ENCODE measurements at regions of chr14 and their contacts with region 1.

Region 1: DNA sequence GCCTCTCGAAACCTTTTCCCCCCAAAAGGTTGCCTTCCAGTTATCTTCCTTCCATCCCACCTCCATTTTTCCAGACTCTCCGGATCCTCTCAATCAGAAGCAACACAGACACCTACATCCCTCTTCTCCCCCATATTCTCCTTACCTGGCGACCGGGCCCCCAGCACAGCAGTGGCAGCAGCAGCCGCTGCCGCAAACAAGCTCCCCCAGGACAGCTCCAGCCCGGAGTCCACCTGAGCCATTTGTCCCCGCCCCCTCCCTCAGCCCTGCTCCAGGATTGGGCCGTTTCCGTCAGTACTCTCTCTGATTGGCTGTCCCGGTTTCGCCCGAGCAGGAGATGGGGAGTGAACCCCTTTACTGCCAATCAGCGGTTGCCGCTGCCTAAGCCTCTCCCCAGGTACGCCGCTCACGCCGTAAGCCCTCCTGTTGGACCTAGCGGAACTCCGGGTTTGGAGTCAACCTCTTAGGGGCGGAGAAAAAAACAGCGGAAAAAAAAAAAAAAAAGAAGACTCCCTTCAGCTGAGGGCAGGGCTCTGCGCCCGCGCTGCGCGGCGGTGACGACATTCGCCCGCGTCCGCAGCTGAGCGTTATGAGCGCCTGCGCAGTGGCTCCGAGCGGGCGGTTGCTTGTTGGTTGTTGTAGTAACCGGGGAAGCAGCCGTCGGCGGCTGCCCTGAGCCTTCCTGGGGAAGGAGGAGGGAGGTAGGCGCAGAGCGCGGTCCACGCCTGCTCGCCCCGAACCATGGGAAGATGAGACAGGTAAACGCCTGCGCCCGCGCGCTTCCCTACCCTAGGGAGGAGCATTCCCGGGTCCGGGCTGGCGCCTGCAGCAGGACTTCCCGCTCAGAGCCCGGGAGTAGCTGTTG is at the starts of genes ERG28 and TTLL5:
- DNase-seq: peak; percentile 94 to 98 (median 97)
- ATAC-seq: peak; percentile 95
- H3K4me3 ChIP-seq: peak within 1 kb of the TSS; percentile 86
- H3K4me3 Mint-ChIP-seq: peak within 1 kb of the TSS; percentile 93 to 100 (median 98)
- H3K27ac ChIP-seq: peak within 1 kb of the TSS; percentile 89
- H3K27ac Mint-ChIP-seq: peak within 1 kb of the TSS; percentile 94 to 100 (median 97)
- H3K4me1 ChIP-seq: peaks cover 0 to 6% of the 10 kb centered on the region in 2 donors
- H3K4me1 Mint-ChIP-seq: peaks cover 11 to 48% (median 39%) of the 10 kb centered on the region in 7 donors
- H3K27me3 ChIP-seq: no peaks in the 10 kb centered on the region
- H3K27me3 Mint-ChIP-seq: peaks cover 0 to 6% (median 0%) of the 10 kb centered on the region in 5 donors
- total RNA-seq, gene ERG28: 7.6 to 17.0 (median 12.4) TPM
- total RNA-seq, gene TTLL5: 21.0 to 31.4 (median 21.6) TPM

Region 2: DNA sequence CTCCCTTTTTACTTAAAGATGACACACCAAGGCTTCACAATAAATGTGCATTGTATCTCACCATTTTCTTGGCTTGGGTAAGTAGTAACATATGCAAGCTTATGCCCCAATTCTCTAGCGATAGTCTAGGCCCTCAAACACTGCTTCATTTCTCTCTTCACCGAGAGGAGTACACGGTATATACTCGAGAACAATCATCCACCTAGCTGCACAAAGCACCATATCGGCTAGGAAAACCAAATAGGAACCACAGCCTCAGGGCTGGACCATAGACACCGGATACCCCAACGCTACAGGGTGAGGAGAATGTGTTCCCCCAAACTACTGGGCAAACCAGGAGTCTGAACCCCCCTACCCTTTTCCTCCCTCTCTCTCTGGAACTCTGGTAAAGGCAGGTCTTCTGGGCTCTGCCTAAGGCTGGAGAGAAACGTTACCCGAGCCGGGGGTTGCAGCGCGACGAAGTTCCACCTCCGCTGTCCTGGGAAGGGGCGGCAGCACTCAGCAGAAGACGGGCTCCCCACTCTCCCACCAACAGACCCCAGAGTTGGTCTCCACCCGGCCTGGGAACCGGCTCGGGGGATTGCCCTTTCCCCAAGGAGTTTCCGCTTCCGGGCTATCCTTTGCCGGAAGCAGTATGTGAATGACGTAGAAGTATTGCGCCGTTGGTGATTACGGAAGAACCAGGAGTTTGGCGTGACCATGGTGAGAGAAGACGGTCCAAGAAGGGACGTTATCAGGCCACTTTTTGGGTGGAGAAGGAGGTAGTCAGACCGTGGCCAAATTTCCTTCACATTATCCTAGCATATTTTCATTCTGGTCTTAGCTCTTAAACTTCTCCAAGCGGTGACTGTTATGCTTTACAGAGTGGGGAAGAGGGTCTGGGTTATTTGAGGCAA is 948.1 kb before region 1 on chr14 and contains the starts of genes AREL1 and FCF1:
- CTCF ChIA-PET with region 1: no interaction called
- POLR2A ChIA-PET with region 1: interaction called, 5 read pairs
- intact Hi-C with region 1: loop called in 1 of 2 experiments (anchors 2 kb)
- DNase-seq: peak; percentile 53 to 87 (median 82)
- ATAC-seq: peak; percentile 96
- H3K4me3 ChIP-seq: peak within 1 kb of the TSS; percentile 75
- H3K4me3 Mint-ChIP-seq: peak within 1 kb of the TSS; percentile 93 to 100 (median 97)
- H3K27ac ChIP-seq: peak within 1 kb of the TSS; percentile 96
- H3K27ac Mint-ChIP-seq: peak within 1 kb of the TSS; percentile 95 to 100 (median 98)
- H3K4me1 ChIP-seq: peaks cover 9 to 24% of the 10 kb centered on the region in 2 donors
- H3K4me1 Mint-ChIP-seq: peaks cover 33 to 79% (median 66%) of the 10 kb centered on the region in 7 donors
- H3K27me3 ChIP-seq: no peaks in the 10 kb centered on the region
- H3K27me3 Mint-ChIP-seq: no peaks in the 10 kb centered on the region
- total RNA-seq, gene AREL1: 35.6 to 52.0 (median 43.5) TPM
- total RNA-seq, gene FCF1: 36.5 to 66.6 (median 60.8) TPM

Region 3: GRCh38 chr14:75176142-75176820 is 484.6 kb before region 1 on chr14 and contains the start of gene TMED10:
- CTCF ChIA-PET with region 1: no interaction called
- POLR2A ChIA-PET with region 1: no interaction called
- intact Hi-C with region 1: loop called (anchors 1 kb)
- DNase-seq: peak; percentile 86 to 96 (median 94)
- ATAC-seq: peak; percentile 84
- H3K4me3 ChIP-seq: peak within 1 kb of the TSS; percentile 93
- H3K4me3 Mint-ChIP-seq: peak within 1 kb of the TSS; percentile 77 to 96 (median 91)
- H3K27ac ChIP-seq: peak within 1 kb of the TSS; percentile 98
- H3K27ac Mint-ChIP-seq: peak within 1 kb of the TSS; percentile 95 to 99 (median 97)
- H3K4me1 ChIP-seq: peaks cover 27 to 33% of the 10 kb centered on the region in 2 donors
- H3K4me1 Mint-ChIP-seq: peaks cover 27 to 60% (median 53%) of the 10 kb centered on the region in 7 donors
- H3K27me3 ChIP-seq: no peaks in the 10 kb centered on the region
- H3K27me3 Mint-ChIP-seq: peaks cover 0 to 7% (median 0%) of the 10 kb centered on the region in 5 donors
- total RNA-seq, gene TMED10: 155 to 233 (median 171) TPM

Region 4: GRCh38 chr14:75577729-75578101 is 83.1 kb before region 1 on chr14:
- CTCF ChIA-PET with region 1: interaction called, 133 read pairs
- POLR2A ChIA-PET with region 1: interaction called, 7 read pairs
- intact Hi-C with region 1: no loop called
- DNase-seq: peak; percentile 45 to 71 (median 54)
- ATAC-seq: peak; percentile 92
- H3K4me3 ChIP-seq: peak overlapping the region; percentile 64
- H3K4me3 Mint-ChIP-seq: peak overlapping the region in 5 of 10 donors; percentile 90 to 96 (median 93)
- H3K27ac ChIP-seq: peak overlapping the region; percentile 41
- H3K27ac Mint-ChIP-seq: peak overlapping the region; percentile 34 to 86 (median 75)
- H3K4me1 ChIP-seq: peaks cover 9 to 12% of the 10 kb centered on the region in 2 donors
- H3K4me1 Mint-ChIP-seq: peaks cover 6 to 19% (median 9%) of the 10 kb centered on the region in 7 donors
- H3K27me3 ChIP-seq: no peaks in the 10 kb centered on the region
- H3K27me3 Mint-ChIP-seq: peaks cover 0 to 8% (median 0%) of the 10 kb centered on the region in 5 donors

Region 5: DNA sequence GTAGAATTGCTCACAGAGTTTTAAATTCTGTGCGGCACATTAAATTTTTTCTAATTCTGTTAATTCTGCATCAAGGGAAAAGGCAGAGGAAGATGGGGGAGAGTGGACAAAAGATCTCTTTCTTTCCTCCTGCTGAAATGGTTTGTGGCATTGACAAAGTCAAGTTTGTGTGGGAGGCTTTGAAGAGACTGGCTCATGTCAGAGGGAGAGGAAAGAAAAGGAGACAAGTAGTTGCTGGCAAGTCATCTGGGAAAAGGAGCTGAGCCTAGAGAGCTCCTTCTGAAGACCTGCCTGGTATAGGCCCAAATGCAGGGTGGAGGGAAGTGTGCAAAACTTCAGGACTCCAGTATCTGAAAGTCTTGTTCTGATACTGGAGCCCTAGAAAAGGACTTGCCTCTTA is 36.5 kb after region 1 on chr14:
- CTCF ChIA-PET with region 1: no interaction called
- POLR2A ChIA-PET with region 1: no interaction called
- intact Hi-C with region 1: no loop called
- DNase-seq: no peak
- ATAC-seq: no peak
- H3K4me3 ChIP-seq: no peak overlapping the region
- H3K4me3 Mint-ChIP-seq: no peak overlapping the region
- H3K27ac ChIP-seq: no peak overlapping the region
- H3K27ac Mint-ChIP-seq: no peak overlapping the region
- H3K4me1 ChIP-seq: no peaks in the 10 kb centered on the region
- H3K4me1 Mint-ChIP-seq: no peaks in the 10 kb centered on the region
- H3K27me3 ChIP-seq: no peaks in the 10 kb centered on the region
- H3K27me3 Mint-ChIP-seq: no peaks in the 10 kb centered on the region

Region 6: GRCh38 chr14:76956316-76957090 is 1295.6 kb after region 1 on chr14:
- CTCF ChIA-PET with region 1: no interaction called
- POLR2A ChIA-PET with region 1: no interaction called
- intact Hi-C with region 1: loop called in 1 of 2 experiments (anchors 10 kb)
- DNase-seq: peak; percentile 70 to 90 (median 78)
- ATAC-seq: peak; percentile 82
- H3K4me3 ChIP-seq: peak overlapping the region; percentile 74
- H3K4me3 Mint-ChIP-seq: peak overlapping the region; percentile 82 to 97 (median 93)
- H3K27ac ChIP-seq: peak overlapping the region; percentile 87
- H3K27ac Mint-ChIP-seq: peak overlapping the region; percentile 88 to 99 (median 98)
- H3K4me1 ChIP-seq: peaks cover 38 to 49% of the 10 kb centered on the region in 2 donors
- H3K4me1 Mint-ChIP-seq: peaks cover 24 to 77% (median 71%) of the 10 kb centered on the region in 7 donors
- H3K27me3 ChIP-seq: no peaks in the 10 kb centered on the region
- H3K27me3 Mint-ChIP-seq: no peaks in the 10 kb centered on the region

Region 7: GRCh38 chr14:77616454-77617229 is 1955.8 kb after region 1 on chr14 and contains the start of gene SPTLC2:
- CTCF ChIA-PET with region 1: no interaction called
- POLR2A ChIA-PET with region 1: no interaction called
- intact Hi-C with region 1: loop called in 1 of 2 experiments (anchors 10 kb)
- DNase-seq: peak; percentile 78 to 99 (median 96)
- ATAC-seq: peak; percentile 98
- H3K4me3 ChIP-seq: peak within 1 kb of the TSS; percentile 55
- H3K4me3 Mint-ChIP-seq: peak within 1 kb of the TSS; percentile 85 to 97 (median 92)
- H3K27ac ChIP-seq: peak within 1 kb of the TSS; percentile 69
- H3K27ac Mint-ChIP-seq: peak within 1 kb of the TSS; percentile 45 to 91 (median 86)
- H3K4me1 ChIP-seq: peaks cover 4 to 5% of the 10 kb centered on the region in 2 donors
- H3K4me1 Mint-ChIP-seq: peaks cover 29 to 52% (median 40%) of the 10 kb centered on the region in 7 donors
- H3K27me3 ChIP-seq: no peaks in the 10 kb centered on the region
- H3K27me3 Mint-ChIP-seq: peaks cover 0 to 4% (median 0%) of the 10 kb centered on the region in 5 donors
- total RNA-seq, gene SPTLC2: 19.0 to 58.1 (median 25.7) TPM

Measured in naive thymus-derived CD4-positive, alpha-beta T cell (primary cell).